ENCODE measurements at regions of chr10 and their contacts with region 1.

Region 1: GRCh38 chr10:15719899-15720634 is at the start of gene ITGA8:
- DNase-seq: no peak
- total RNA-seq, gene ITGA8: 2.5 TPM

Region 2: DNA sequence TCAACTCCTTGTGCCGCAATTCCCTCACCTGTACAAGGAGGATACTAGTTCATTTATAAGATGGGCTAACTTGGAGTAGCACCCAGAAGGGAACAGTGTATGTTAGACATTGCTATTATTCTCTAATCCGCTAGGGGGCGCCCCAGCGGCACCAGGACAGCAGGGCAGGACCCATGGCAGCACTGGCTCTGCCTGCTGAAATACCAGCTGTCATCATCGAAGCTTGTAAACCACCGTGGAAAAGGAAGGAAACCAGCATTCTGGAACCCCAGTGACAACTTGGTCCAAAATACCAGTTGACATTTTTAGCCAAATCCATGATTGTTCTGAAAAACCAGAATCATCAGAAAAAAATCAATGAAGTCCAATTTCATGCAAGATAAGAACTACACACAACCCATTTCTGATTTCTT is 134.8 kb before region 1 on chr10:
- intact Hi-C with region 1: loop called (anchors 5 kb)
- DNase-seq: no peak

Region 3: DNA sequence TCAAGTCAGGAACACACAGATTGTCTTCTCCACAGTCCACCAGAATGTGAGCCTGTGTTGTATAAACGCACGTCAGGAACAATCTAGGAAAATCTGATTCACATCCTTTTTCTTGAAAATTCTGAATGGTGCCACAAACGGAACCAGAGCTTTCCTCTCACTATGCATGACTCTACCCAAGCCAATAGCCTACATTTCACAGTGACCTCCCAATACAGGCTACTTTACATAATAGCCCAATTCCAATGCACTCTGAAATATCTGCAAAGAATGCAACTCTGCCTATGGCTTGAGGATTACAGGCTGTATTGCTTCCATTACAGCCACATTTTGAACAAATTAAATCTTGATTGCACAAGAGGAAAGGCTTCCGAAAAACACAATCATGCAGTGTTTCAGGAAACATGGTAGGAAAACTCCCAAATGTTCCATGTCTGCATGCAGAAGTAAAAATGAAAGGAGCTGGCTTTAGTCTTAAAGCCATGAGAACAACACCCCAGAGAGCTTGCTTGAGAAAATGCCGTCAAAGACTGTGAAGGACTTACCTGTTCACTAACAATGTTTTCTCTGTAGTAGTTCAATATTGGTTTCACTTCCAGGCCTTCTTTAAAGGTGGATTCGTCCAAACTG is 114.2 kb before region 1 on chr10:
- intact Hi-C with region 1: no loop called
- DNase-seq: no peak

Region 4: GRCh38 chr10:15824498-15824897 is 104.4 kb after region 1 on chr10:
- intact Hi-C with region 1: loop called (anchors 2 kb)
- DNase-seq: no peak

Region 5: DNA sequence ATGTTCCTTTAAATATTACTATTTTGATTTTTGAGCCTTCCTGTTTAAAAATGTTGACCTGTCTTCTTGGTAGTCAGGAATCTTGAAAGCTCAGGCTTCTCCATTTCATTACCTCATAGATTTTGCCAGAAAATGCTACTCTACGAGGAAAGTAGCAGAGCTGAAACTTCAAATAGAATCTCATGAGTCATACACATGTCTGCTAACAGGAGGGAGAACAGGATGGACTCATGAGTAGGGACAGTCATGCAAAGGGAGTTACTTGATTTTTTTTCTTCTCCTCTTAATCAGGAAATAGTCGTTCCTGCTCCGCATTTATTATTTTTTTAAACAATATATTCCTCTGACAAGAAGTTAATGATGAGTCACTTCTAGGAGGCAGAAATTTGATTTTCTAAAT is 177.2 kb after region 1 on chr10:
- intact Hi-C with region 1: no loop called
- DNase-seq: no peak